ENCODE measurements at regions of chr20 and their contacts with region 1.

Region 1: DNA sequence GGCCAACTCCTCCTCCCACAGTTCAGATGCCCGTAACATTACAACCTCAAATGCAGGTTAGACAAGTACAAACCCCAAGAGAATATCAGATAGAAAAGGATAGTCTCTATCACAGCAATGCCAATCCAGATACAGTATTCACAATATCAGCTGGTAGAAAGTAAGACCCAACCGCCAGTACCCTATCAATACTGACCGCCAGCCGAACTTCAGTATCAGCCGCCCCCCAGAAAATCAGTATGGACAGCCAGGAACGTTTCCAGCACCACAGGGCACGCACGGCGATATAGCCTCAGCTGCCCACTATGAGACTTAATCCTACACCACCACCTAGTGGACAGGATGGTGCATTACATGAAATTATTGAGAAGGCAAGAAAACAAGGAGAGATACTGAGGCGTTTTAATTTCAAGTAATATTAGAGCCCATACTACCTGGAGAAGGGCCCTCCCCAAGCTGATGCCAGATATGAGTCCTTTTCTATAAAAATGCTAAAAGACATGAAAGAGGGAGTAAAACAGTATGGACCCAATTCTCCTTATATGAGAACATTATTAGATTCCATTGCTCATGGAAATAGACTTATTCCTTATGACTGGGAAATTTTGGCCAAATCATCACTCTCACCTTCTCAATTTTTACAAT is 17.6 kb upstream of the EIF2S2 start:
- DNase-seq: no peak

Region 2: GRCh38 chr20:33450867-33451266 is 678.8 kb before region 1 on chr20:
- intact Hi-C with region 1: loop called (anchors 10 kb)
- DNase-seq: no peak

Region 3: GRCh38 chr20:33862709-33863403 is 266.8 kb before region 1 on chr20:
- intact Hi-C with region 1: loop called (anchors 5 kb)
- DNase-seq: no peak

Region 4: DNA sequence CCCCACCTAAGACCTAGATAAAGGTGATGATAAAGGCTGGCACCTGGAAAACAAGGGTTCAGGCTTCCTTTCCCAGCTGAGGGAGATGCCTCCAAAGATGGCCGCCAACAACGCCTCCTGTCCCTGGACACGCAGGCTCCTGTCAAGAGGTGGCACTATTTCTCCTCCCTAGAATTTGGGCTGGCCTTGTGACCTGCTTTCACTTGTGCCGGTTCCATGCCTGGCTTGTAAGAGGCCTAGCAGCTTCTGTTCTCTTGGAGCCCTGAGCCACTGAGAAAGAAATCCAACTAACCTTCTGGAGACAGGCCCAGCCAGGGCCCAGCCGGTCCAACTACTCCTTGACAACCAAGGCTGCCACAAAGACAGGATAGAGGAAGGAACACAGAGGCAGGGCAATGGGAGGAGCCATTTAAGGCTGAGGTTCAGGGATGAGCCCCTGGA is 196.2 kb before region 1 on chr20:
- intact Hi-C with region 1: loop called (anchors 2 kb)
- DNase-seq: peak; percentile 76